ENCODE measurements at regions of chr17 and their contacts with region 1.

Region 1: GRCh38 chr17:77429919-77430752 is 289.4 kb downstream of the SEC14L1 start:
- DNase-seq: peak; percentile 84 to 88
- ATAC-seq: peak; percentile 28 to 58
- H3K4me3 ChIP-seq: no peak overlapping the region
- H3K27ac ChIP-seq: peak overlapping the region; percentile 75 to 95
- H3K4me1 ChIP-seq: peaks cover 60% of the 10 kb centered on the region
- CTCF ChIP-seq: peak; percentile 81
- EP300 ChIP-seq: 0 out of 5 replicates have a peak, but pooled peaks of 1 of the 2 experiments have one; percentile 0
- POLR2A ChIP-seq: no peak
- RAD21 ChIP-seq: peak; percentile 83 to 84

Region 2: GRCh38 chr17:77247048-77247541 is 183.0 kb before region 1 on chr17:
- CTCF ChIA-PET with region 1: no interaction called
- POLR2A ChIA-PET with region 1: no interaction called
- DNase-seq: peak; percentile 76 to 82
- ATAC-seq: peak; percentile 91 to 97
- H3K4me3 ChIP-seq: peak overlapping the region; percentile 57
- H3K27ac ChIP-seq: peak overlapping the region; percentile 81 to 92
- H3K4me1 ChIP-seq: peaks cover 3% of the 10 kb centered on the region; the same call in 1 of the 3 replicates
- CTCF ChIP-seq: peak; percentile 99
- EP300 ChIP-seq: no peak
- POLR2A ChIP-seq: no peak
- RAD21 ChIP-seq: peak; percentile 90 to 99

Region 3: DNA sequence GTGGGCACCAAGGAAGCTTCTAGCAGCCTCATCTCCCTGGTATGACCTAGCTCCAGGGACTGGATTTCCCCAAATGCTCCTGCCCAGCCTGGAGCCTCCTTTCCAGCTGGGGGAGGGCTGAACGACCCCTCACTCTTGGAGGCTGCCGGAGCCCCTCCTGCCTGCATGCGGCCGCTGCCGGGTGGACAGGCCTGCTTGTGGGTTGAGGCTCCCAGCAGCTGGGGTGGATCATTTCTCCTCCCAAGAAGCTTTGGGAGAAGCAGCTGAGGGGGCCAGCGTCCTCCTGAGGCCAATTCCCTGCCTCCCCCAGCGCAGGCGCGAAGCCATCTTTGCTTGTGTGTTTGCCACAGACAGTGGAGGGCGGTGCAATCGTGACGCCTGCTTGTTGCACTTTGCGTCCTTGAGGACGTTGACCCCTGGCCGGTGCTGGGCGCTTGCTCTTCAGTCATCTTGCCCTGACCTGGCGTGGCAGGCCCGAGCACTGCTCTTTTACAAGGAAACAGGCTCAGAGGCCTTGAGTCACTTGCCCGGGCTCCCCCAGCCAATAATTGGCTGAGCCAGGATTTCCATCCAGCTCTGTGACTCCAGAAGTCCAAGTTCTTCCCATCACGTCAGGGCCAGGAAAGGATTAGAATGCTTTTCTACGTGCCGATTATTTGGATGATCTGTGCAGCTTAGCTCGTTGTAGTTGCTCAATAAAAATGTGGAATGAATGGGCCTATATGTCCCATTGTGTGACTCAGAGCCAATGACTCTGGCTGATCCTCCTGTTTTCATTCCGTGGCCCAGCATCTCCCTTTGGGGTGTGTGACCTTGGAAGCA is 75.5 kb before region 1 on chr17:
- CTCF ChIA-PET with region 1: interaction called, 24 read pairs
- POLR2A ChIA-PET with region 1: no interaction called
- DNase-seq: peak; percentile 65 to 66
- ATAC-seq: peak; percentile 49 to 60
- H3K4me3 ChIP-seq: no peak overlapping the region
- H3K27ac ChIP-seq: peak overlapping the region; percentile 42 to 82; a peak in 5 of 6 replicates
- H3K4me1 ChIP-seq: peaks cover 61% of the 10 kb centered on the region
- CTCF ChIP-seq: no peak
- EP300 ChIP-seq: no peak
- POLR2A ChIP-seq: no peak
- RAD21 ChIP-seq: no peak

Region 4: DNA sequence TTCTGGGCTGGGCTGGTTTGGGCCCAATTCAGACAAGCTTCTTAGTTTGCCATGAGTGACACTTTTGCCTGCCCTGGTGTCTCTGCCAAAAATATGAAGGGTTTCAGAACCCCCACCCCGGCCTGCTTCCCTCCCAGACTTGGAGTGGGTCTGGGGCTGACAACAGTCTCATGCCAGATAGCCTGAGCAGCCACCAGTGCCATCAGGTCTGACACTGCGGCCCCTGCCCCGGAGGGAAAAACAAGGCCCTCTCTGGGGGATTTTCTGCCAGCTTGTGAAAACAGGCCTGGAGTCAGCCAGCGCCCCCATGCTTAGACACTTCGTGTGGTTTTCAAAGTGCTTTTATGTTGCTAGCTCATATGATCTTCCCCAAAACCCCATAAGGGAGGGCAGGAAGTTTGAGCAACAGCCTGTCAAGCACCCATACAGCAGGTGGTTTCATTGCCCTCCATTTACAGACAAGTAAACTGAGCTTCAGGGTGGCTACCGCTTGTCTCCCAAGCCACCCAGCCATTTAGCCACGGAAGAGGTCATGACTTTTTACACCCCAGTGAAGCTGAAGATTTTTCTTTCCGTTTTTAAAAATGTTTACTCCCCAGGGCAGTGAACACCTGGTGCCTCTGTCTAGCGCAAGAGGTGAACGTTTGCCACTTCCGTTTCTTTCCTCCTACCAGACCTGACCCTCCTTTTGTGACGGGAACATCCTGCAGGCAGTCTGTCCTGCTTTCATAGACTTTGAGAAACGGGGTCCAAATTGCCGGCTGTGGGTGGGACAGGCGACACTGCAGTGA is 11.2 kb after region 1 on chr17:
- CTCF ChIA-PET with region 1: interaction called, 111 read pairs
- POLR2A ChIA-PET with region 1: interaction called, 3 read pairs
- DNase-seq: no peak
- ATAC-seq: no peak
- H3K4me3 ChIP-seq: no peak overlapping the region
- H3K27ac ChIP-seq: no peak overlapping the region
- H3K4me1 ChIP-seq: peaks cover 8% of the 10 kb centered on the region; the same call in 1 of the 3 replicates
- CTCF ChIP-seq: no peak
- EP300 ChIP-seq: no peak
- POLR2A ChIP-seq: no peak
- RAD21 ChIP-seq: no peak

Region 5: GRCh38 chr17:77460514-77461046 is 30.4 kb after region 1 on chr17:
- CTCF ChIA-PET with region 1: interaction called, 13 read pairs
- POLR2A ChIA-PET with region 1: no interaction called
- DNase-seq: no peak
- ATAC-seq: no peak
- H3K4me3 ChIP-seq: no peak overlapping the region
- H3K27ac ChIP-seq: peak overlapping the region in 1 of 2 experiments; percentile 19; a peak in 1 of 6 replicates
- H3K4me1 ChIP-seq: peaks cover 8% of the 10 kb centered on the region; the same call in 2 of the 3 replicates
- CTCF ChIP-seq: no peak
- EP300 ChIP-seq: no peak
- POLR2A ChIP-seq: no peak
- RAD21 ChIP-seq: no peak

Region 6: DNA sequence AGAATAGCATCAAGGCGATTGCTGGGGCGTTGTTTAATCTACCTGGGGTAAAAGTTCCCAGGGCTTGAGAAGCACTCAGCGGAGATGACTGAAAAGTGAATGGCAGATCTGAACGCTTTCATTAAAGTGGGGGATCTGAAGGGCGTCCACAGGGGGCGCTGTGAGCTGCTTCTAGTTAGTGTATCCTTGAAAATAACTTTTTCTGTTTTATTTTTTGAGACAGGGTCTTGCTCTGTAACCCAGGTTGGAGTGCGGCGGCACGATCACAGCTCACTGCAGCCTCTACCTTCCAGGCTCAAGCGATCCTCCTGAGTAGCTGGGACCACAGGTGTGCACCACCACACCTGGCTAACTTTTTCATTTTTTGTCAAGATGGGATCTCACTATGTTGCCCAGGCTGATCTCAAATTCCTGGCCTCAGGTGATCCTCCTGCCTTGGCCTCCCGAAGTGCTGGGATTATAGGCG is 71.0 kb after region 1 on chr17:
- CTCF ChIA-PET with region 1: interaction called, 141 read pairs
- POLR2A ChIA-PET with region 1: no interaction called
- DNase-seq: peak; percentile 55 to 57
- ATAC-seq: 0 out of 6 replicates have a peak, but pooled peaks of 1 of the 2 experiments have one; percentile 17
- H3K4me3 ChIP-seq: no peak overlapping the region
- H3K27ac ChIP-seq: no peak overlapping the region
- H3K4me1 ChIP-seq: no peaks in the 10 kb centered on the region
- CTCF ChIP-seq: peak; percentile 61
- EP300 ChIP-seq: no peak
- POLR2A ChIP-seq: no peak
- RAD21 ChIP-seq: peak; percentile 23 to 48; a peak in 2 of 5 replicates